PC-9 (cell line): ENCODE measurements at regions of chr2 and their contacts with region 1.

Region 1: DNA sequence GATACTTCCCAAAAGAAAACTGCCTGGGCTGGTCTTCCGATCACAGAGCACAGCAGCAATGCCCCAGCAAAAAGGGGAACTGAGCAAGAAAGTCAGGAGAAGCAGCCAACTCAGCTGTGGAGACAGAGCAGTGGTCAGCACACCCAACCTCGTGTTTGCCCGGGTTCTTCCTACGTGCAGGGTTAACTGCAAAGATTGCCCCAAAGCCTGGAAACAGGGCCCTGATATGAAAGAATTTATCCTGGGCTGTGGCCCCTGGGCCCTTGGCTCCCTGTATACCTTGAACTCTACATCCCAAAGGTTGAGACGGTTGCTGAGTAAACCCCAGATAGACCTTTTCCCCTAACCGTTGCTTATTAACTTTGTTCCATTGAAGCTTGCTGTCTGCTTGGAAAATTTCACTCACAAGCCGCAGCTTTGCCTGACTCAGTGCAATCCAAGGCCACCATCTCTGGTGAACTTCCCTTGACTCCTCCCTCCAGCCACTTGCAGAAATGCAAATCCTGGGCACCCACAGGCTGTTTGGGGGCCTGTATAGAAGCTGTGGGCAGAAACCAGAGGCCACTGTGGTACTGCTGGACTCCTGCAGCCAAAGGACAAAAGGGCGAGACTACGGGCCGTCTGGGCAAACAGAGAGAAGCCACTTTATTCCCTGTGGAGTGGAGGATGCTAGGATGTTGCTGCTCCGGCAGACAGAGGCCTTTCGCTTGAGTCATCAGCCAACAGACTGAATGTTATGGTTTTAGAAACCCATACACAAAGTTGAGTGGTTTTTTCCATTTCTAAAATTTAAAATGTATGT is 18.2 kb downstream of the NRP2 start:
- DNase-seq: peak in 1 of 2 experiments; percentile 51
- H3K4me3 ChIP-seq: no peak overlapping the region
- H3K27ac ChIP-seq: peak overlapping the region; percentile 64
- H3K4me1 ChIP-seq: peaks cover 25% of the 10 kb centered on the region
- H3K27me3 ChIP-seq: no peaks in the 10 kb centered on the region
- CTCF ChIP-seq: no peak

Region 2: GRCh38 chr2:204731996-204732395 is 968.5 kb before region 1 on chr2:
- CTCF ChIA-PET with region 1: no interaction called
- POLR2A ChIA-PET with region 1: no interaction called
- intact Hi-C with region 1: no loop called
- DNase-seq: no peak
- H3K4me3 ChIP-seq: no peak overlapping the region
- H3K27ac ChIP-seq: no peak overlapping the region
- H3K4me1 ChIP-seq: no peaks in the 10 kb centered on the region
- H3K27me3 ChIP-seq: no peaks in the 10 kb centered on the region
- CTCF ChIP-seq: no peak

Region 3: GRCh38 chr2:205675861-205676516 is 24.5 kb before region 1 on chr2:
- CTCF ChIA-PET with region 1: no interaction called
- POLR2A ChIA-PET with region 1: no interaction called
- intact Hi-C with region 1: no loop called
- DNase-seq: peak in 1 of 2 experiments; percentile 53
- H3K4me3 ChIP-seq: no peak overlapping the region
- H3K27ac ChIP-seq: no peak overlapping the region
- H3K4me1 ChIP-seq: no peaks in the 10 kb centered on the region; the same call in 1 of the 2 replicates
- H3K27me3 ChIP-seq: no peaks in the 10 kb centered on the region
- CTCF ChIP-seq: peak; percentile 85

Region 4: GRCh38 chr2:205754924-205755321 is 54.4 kb after region 1 on chr2:
- CTCF ChIA-PET with region 1: no interaction called
- POLR2A ChIA-PET with region 1: no interaction called
- intact Hi-C with region 1: loop called (anchors 2 kb)
- DNase-seq: peak; percentile 83 to 92
- H3K4me3 ChIP-seq: peak overlapping the region; percentile 8; the same call in 1 of the 2 replicates
- H3K27ac ChIP-seq: peak overlapping the region; percentile 95
- H3K4me1 ChIP-seq: peaks cover 91% of the 10 kb centered on the region
- H3K27me3 ChIP-seq: no peaks in the 10 kb centered on the region
- CTCF ChIP-seq: no peak